Activated CD8-positive, alpha-beta memory T cell treated with anti-CD3 and anti-CD28 coated beads, Interleukin-2, amount 10 ng/mL, durations not matched to agents 7 days and 5 days (primary cell): ENCODE measurements at regions of chr1 and their contacts with region 1.

Region 1: DNA sequence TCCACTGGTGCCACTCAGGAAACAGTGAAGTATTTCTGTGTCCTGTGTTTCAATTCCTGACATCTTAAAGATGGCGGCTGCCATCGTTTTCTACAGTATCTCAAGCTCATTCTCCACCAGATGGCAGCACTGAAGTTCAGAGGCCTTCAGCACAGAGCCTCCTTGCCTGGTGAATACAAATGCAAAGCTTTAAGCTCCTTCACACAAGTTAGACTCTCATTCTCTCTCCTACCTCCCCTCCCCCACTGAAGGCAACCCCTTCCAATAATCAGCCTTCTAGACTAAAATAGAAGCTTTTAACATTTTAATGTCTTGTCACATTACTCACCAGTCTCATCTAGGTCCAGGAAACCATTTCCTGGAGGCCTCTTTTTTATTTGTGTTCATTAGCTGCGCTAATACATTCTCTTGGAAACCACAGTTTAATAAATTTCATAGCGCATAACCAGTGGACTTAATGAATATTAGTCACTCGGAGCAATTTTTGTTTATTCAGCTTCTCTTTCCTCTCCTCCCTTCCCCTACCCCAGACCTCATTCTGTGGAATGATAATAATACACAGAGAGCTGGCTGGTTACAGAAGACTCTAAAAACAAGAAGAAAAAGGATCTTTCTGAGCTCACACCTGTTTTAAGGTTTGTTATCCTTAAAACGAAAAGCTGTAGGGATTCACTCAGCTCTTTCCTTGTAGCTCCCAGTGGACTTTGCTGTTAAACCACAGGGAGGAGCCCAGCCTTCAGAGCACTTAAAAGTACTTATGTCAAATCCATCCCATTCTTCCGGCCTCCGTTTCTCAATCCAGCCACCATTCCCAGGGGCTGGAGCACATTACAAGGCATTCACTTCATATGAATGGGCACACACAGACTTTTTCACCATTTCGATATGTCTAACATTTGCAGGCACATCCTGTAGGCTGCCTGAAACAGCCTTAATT is 384.9 kb downstream of the HLX start:
- DNase-seq: peak; percentile 56
- ATAC-seq: peak; percentile 65
- H3K4me3 Mint-ChIP-seq: no peak overlapping the region
- H3K27ac Mint-ChIP-seq: no peak overlapping the region
- H3K4me1 Mint-ChIP-seq: no peaks in the 10 kb centered on the region
- H3K27me3 Mint-ChIP-seq: peaks cover 5% of the 10 kb centered on the region

Region 2: DNA sequence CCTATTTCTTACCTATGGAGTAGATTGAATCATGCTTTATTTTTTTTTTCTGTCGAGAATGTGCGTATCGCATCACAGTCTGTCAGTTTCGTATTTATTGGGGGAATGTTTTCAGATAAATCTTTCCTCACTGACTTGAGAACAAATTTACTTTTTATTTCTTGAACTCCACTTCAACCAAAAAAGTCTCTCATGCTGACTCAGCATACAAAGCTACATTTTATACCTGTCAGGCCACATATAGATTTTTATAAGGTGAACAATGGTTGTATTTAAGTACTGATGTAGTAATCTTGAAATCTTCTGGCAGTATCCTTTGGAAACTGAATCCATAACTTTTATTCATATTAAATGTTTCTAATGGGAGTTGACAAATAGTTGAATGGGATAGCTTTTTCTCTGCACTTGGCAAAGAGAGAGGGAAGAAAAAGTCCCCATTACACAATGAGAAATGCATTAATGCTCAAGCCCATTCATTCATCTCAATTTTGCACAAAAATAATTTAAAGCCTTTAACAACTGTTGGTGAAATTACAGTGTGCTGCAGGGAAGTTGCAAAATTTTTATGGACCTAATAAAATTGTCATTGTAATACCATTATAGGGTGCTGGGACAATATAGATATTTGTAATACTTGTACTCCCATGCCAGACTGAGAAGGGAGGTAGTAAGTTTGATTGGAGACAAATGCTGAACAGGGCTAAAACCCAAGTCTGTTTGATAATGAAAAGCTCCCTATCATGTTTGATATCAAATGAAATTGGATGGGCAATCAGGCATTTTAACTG is 17.3 kb before region 1 on chr1:
- CTCF ChIA-PET with region 1: no interaction called
- DNase-seq: no peak
- ATAC-seq: no peak
- H3K4me3 Mint-ChIP-seq: no peak overlapping the region
- H3K27ac Mint-ChIP-seq: no peak overlapping the region
- H3K4me1 Mint-ChIP-seq: no peaks in the 10 kb centered on the region
- H3K27me3 Mint-ChIP-seq: no peaks in the 10 kb centered on the region

Region 3: DNA sequence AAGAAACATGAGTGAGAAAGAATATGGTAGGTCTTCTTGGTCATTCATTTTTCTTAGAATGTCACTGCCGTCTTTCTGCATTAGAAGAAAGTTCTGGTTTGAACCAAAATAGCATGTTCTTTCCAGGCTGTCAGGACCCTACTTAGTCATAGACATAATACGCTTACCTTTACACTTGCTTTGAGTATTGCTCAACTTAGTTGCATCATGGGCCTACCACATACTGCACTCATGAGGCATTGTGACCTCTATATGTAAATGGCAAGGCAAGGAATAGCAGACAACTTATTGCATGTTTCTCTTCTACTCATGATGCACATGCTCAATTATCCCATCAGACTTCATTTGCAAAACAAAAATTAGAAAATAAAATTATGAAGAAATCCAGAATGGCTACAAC is 30.1 kb after region 1 on chr1:
- CTCF ChIA-PET with region 1: no interaction called
- DNase-seq: no peak
- ATAC-seq: no peak
- H3K4me3 Mint-ChIP-seq: no peak overlapping the region
- H3K27ac Mint-ChIP-seq: no peak overlapping the region
- H3K4me1 Mint-ChIP-seq: no peaks in the 10 kb centered on the region
- H3K27me3 Mint-ChIP-seq: no peaks in the 10 kb centered on the region

Region 4: GRCh38 chr1:221435504-221435904 is 171.4 kb after region 1 on chr1:
- CTCF ChIA-PET with region 1: interaction called, 29 read pairs
- DNase-seq: no peak
- ATAC-seq: no peak
- H3K4me3 Mint-ChIP-seq: no peak overlapping the region
- H3K27ac Mint-ChIP-seq: no peak overlapping the region
- H3K4me1 Mint-ChIP-seq: peaks cover 28% of the 10 kb centered on the region
- H3K27me3 Mint-ChIP-seq: peaks cover 12% of the 10 kb centered on the region